ENCODE measurements at regions of chr14 and their contacts with region 1.

Region 1: DNA sequence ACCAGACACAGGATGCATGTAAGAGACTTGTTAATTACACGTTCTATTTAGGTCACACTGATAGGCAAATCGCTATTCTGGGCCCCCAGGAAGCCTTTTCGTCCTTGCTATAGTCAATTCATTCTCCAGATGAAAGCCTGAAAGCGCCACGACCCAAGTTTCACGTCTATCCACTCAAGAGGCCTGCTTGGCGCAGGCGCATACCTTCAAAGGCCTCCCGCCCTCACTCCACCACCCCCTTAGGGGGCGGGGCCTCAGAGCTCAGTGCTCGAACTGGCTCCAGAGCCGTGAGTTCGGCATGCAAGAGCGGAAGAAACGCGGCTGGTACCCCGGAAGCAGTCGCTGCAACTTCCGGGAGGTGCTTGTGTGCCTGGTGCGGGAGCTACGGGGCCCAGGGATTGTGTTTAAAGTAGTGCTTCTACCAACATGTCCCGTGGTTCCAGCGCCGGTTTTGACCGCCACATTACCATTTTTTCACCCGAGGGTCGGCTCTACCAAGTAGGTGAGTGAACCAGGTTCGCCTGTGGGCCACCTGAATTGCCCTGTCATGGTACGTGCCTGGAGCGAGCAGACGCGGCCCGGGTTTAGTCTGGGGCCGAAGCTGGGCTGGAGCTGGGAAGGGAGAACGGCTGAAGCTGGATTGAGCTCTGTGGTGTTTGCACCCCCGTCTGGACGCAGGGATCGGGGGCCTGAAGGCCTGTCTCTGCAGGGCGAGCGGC is at the start of gene PSMA6:
- DNase-seq: peak; percentile 100
- ATAC-seq: peak; percentile 92
- H3K4me3 ChIP-seq: peak within 1 kb of the TSS; percentile 78 to 90 (median 86)
- H3K27ac ChIP-seq: peak within 1 kb of the TSS; percentile 96
- H3K4me1 ChIP-seq: peaks cover 54% of the 10 kb centered on the region
- H3K27me3 ChIP-seq: no peaks in the 10 kb centered on the region; a peak in 2 of 5 replicates
- CTCF ChIP-seq: peak; percentile 25; the same call in 1 of the 2 replicates
- EP300 ChIP-seq: peak; percentile 72 to 77; a peak in 3 of 4 replicates
- POLR2A ChIP-seq: peak; percentile 94 to 98
- RAD21 ChIP-seq: peak; percentile 54
- total RNA-seq, gene PSMA6: 1,109 and 1,579 TPM in 2 replicates

Region 2: GRCh38 chr14:34409721-34410120 is 882.5 kb before region 1 on chr14:
- CTCF ChIA-PET with region 1: no interaction called
- POLR2A ChIA-PET with region 1: no interaction called
- in situ Hi-C with region 1: no loop called
- intact Hi-C with region 1: no loop called
- DNase-seq: no peak
- ATAC-seq: no peak; the same call in 2 of the 3 replicates
- H3K4me3 ChIP-seq: no peak overlapping the region
- H3K27ac ChIP-seq: no peak overlapping the region
- H3K4me1 ChIP-seq: no peaks in the 10 kb centered on the region
- H3K27me3 ChIP-seq: peaks cover 0 to 4% of the 10 kb centered on the region in 2 experiments; a peak in 2 of 5 replicates
- CTCF ChIP-seq: no peak
- EP300 ChIP-seq: no peak
- POLR2A ChIP-seq: no peak
- RAD21 ChIP-seq: no peak

Region 3: GRCh38 chr14:34496679-34497513 is 795.3 kb before region 1 on chr14:
- CTCF ChIA-PET with region 1: no interaction called
- POLR2A ChIA-PET with region 1: no interaction called
- in situ Hi-C with region 1: no loop called
- intact Hi-C with region 1: no loop called
- DNase-seq: peak; percentile 99
- ATAC-seq: peak; percentile 71
- H3K4me3 ChIP-seq: peak overlapping the region; percentile 6 to 56 (median 15)
- H3K27ac ChIP-seq: peak overlapping the region; percentile 86
- H3K4me1 ChIP-seq: peaks cover 68% of the 10 kb centered on the region
- H3K27me3 ChIP-seq: no peaks in the 10 kb centered on the region
- CTCF ChIP-seq: peak; percentile 80
- EP300 ChIP-seq: peak; percentile 81 to 88
- POLR2A ChIP-seq: peak in 1 of 2 experiments; percentile 76; a peak in 1 of 4 replicates
- RAD21 ChIP-seq: peak; percentile 51; the same call in 1 of the 2 replicates

Region 4: DNA sequence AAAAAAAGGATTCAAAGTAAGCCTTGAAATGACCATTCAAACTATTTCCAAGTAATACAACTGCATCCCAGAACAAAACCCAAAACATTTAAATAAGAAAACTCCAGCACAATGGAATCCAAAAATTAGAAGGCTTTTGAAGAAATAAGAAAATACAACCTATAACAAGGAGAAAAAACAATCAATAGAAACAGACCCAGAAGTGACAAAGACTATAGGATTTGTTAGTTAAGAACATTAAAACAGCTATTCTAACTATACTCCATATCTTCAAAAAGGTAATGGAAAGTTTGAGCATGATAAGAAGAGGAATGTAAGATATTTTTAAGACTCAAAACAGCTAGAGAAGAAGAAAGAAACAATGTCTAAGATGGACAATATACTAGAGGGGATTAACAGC is 348.7 kb before region 1 on chr14:
- CTCF ChIA-PET with region 1: no interaction called
- POLR2A ChIA-PET with region 1: no interaction called
- in situ Hi-C with region 1: no loop called
- intact Hi-C with region 1: no loop called
- DNase-seq: no peak
- ATAC-seq: no peak
- H3K4me3 ChIP-seq: no peak overlapping the region
- H3K27ac ChIP-seq: no peak overlapping the region
- H3K4me1 ChIP-seq: no peaks in the 10 kb centered on the region
- H3K27me3 ChIP-seq: no peaks in the 10 kb centered on the region
- CTCF ChIP-seq: no peak
- EP300 ChIP-seq: no peak
- POLR2A ChIP-seq: no peak
- RAD21 ChIP-seq: no peak

Region 5: DNA sequence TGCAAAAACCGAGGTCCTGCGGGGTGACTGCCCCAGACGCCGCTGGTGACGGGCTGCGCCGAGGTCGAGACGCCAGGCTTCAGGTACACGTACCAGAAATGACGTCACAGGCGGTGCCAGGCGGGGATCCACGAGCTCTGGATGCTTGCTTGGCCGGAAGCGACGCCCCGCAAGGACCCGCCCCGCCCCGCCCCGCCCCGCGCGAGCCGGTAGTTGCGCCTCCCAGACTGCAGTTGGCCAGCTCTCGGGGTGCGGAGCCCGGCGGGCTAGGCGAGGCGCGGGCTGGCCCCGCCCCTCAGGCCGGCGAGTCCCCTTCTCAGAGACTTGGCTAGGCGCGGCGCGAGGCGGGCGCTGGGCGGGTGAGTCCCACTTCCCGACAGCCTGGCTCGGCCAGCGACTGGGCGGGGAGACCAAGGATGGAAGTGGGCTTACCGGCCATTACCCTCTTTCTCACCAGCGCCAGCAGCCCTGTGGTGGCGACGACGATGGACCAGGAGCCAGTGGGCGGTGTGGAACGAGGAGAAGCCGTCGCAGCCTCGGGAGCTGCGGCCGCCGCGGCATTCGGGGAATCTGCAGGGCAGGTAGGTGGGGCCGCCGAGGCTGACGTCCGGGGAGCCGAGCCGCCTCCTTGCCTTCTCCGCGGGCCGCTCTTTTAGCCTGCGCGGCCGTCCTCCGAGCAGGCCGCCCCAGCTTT is 246.0 kb before region 1 on chr14 and contains the start of gene FAM177A1:
- CTCF ChIA-PET with region 1: no interaction called
- POLR2A ChIA-PET with region 1: interaction called, 19 read pairs
- in situ Hi-C with region 1: no loop called
- intact Hi-C with region 1: loop called (anchors 10 kb)
- DNase-seq: peak; percentile 99
- ATAC-seq: peak; percentile 97
- H3K4me3 ChIP-seq: peak within 1 kb of the TSS; percentile 81 to 96 (median 90)
- H3K27ac ChIP-seq: peak within 1 kb of the TSS; percentile 82
- H3K4me1 ChIP-seq: peaks cover 52% of the 10 kb centered on the region
- H3K27me3 ChIP-seq: no peaks in the 10 kb centered on the region; a peak in 1 of 5 replicates
- CTCF ChIP-seq: peak; percentile 48
- EP300 ChIP-seq: peak in 1 of 2 experiments; percentile 44; a peak in 2 of 4 replicates
- POLR2A ChIP-seq: peak; percentile 93 to 96
- RAD21 ChIP-seq: peak; percentile 72
- total RNA-seq, gene FAM177A1: 116 and 119 TPM in 2 replicates

Region 6: DNA sequence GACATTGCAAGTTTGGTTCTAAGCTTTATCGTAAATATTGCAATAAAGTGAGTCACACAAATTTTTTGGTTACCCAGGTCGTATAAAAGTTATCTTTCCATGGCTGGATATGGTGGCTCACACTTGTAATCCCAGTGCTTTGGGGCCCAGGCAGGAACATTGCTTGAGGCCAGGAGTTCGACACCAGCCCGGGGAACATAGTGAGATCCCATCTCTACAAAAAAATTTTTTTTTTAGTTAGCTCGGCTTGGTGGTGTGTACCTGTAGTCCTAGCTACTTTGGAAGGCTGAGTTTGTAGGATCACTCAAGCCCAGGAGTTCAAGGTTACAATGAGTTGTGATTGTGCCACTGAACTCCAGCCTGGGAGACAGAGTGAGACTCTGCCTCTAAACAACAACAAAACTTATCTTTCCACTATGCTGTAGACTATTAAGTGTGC is 145.5 kb before region 1 on chr14:
- CTCF ChIA-PET with region 1: no interaction called
- POLR2A ChIA-PET with region 1: interaction called, 15 read pairs
- in situ Hi-C with region 1: no loop called
- intact Hi-C with region 1: loop called (anchors 1 kb)
- DNase-seq: peak; percentile 72
- ATAC-seq: peak; percentile 84
- H3K4me3 ChIP-seq: no peak overlapping the region
- H3K27ac ChIP-seq: peak overlapping the region; percentile 3
- H3K4me1 ChIP-seq: peaks cover 33% of the 10 kb centered on the region
- H3K27me3 ChIP-seq: no peaks in the 10 kb centered on the region
- CTCF ChIP-seq: no peak
- EP300 ChIP-seq: no peak
- POLR2A ChIP-seq: no peak
- RAD21 ChIP-seq: no peak

Region 7: GRCh38 chr14:35277179-35277578 is 15.0 kb before region 1 on chr14:
- CTCF ChIA-PET with region 1: no interaction called
- POLR2A ChIA-PET with region 1: interaction called, 36 read pairs
- in situ Hi-C with region 1: no loop called
- intact Hi-C with region 1: no loop called
- DNase-seq: no peak
- ATAC-seq: peak; percentile 41
- H3K4me3 ChIP-seq: no peak overlapping the region
- H3K27ac ChIP-seq: no peak overlapping the region
- H3K4me1 ChIP-seq: peaks cover 6% of the 10 kb centered on the region; the same call in 1 of the 2 replicates
- H3K27me3 ChIP-seq: no peaks in the 10 kb centered on the region
- CTCF ChIP-seq: no peak
- EP300 ChIP-seq: no peak
- POLR2A ChIP-seq: no peak
- RAD21 ChIP-seq: no peak

Region 8: DNA sequence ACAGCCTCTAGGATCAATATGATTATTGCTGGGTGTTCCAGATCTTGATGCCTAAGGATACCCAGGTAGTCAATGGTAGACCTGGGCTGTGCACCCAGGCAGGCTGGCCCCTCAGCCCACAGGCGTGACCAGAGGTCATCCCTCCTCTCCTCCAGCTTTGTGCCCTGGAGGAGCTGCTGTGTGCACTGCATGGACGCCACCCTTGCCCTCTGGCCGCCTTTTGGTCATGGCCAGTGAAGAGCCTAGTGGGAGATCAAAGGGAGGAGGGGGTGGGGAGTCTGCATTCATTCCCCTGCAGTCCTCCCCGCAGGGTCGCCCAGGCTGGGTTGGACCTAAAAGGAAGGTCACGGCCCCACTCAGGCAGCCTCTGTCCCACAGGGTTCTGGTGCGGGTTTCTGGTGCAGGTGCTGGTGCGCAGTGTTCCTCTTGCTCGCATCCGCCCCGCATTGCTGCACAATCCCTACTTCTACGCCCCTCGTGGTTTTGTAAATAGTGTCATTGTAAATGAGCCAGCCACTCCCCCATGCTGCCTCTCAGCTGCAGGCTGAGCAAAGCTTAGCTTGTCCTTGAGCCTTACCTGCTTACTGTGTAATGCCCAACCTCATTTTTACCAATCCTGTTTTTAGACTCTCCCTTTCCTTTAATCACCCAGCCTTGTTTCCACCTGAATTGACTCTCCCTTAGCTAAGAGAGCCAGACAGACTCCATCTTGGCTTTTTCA is 55.3 kb after region 1 on chr14:
- CTCF ChIA-PET with region 1: interaction called, 3 read pairs
- POLR2A ChIA-PET with region 1: interaction called, 45 read pairs
- in situ Hi-C with region 1: no loop called
- intact Hi-C with region 1: no loop called
- DNase-seq: peak; percentile 99
- ATAC-seq: peak; percentile 94
- H3K4me3 ChIP-seq: peak overlapping the region; percentile 12 to 69 (median 52)
- H3K27ac ChIP-seq: peak overlapping the region; percentile 72
- H3K4me1 ChIP-seq: peaks cover 75% of the 10 kb centered on the region
- H3K27me3 ChIP-seq: no peaks in the 10 kb centered on the region; a peak in 1 of 5 replicates
- CTCF ChIP-seq: peak; percentile 38
- EP300 ChIP-seq: peak; percentile 91 to 96
- POLR2A ChIP-seq: peak in 1 of 2 experiments; percentile 77; a peak in 2 of 4 replicates
- RAD21 ChIP-seq: peak; percentile 70

Region 9: GRCh38 chr14:35374273-35374681 is 82.1 kb after region 1 on chr14:
- CTCF ChIA-PET with region 1: no interaction called
- POLR2A ChIA-PET with region 1: interaction called, 10 read pairs
- in situ Hi-C with region 1: no loop called
- intact Hi-C with region 1: no loop called
- DNase-seq: peak; percentile 89
- ATAC-seq: peak; percentile 6; the same call in 2 of the 3 replicates
- H3K4me3 ChIP-seq: no peak overlapping the region
- H3K27ac ChIP-seq: no peak overlapping the region
- H3K4me1 ChIP-seq: peaks cover 48% of the 10 kb centered on the region
- H3K27me3 ChIP-seq: no peaks in the 10 kb centered on the region
- CTCF ChIP-seq: no peak
- EP300 ChIP-seq: peak; percentile 63 to 91
- POLR2A ChIP-seq: no peak
- RAD21 ChIP-seq: no peak

Region 10: GRCh38 chr14:35480128-35480769 is 188.0 kb after region 1 on chr14:
- CTCF ChIA-PET with region 1: no interaction called
- POLR2A ChIA-PET with region 1: no interaction called
- in situ Hi-C with region 1: no loop called
- intact Hi-C with region 1: no loop called
- DNase-seq: no peak
- ATAC-seq: no peak; the same call in 1 of the 3 replicates
- H3K4me3 ChIP-seq: no peak overlapping the region
- H3K27ac ChIP-seq: no peak overlapping the region
- H3K4me1 ChIP-seq: no peaks in the 10 kb centered on the region
- H3K27me3 ChIP-seq: no peaks in the 10 kb centered on the region; a peak in 1 of 5 replicates
- CTCF ChIP-seq: no peak
- EP300 ChIP-seq: no peak
- POLR2A ChIP-seq: no peak
- RAD21 ChIP-seq: no peak

Measured in HepG2 (cell line).